Aorta (tissue), 5 donors: ENCODE measurements at regions of chr14 and their contacts with region 1.

Region 1: DNA sequence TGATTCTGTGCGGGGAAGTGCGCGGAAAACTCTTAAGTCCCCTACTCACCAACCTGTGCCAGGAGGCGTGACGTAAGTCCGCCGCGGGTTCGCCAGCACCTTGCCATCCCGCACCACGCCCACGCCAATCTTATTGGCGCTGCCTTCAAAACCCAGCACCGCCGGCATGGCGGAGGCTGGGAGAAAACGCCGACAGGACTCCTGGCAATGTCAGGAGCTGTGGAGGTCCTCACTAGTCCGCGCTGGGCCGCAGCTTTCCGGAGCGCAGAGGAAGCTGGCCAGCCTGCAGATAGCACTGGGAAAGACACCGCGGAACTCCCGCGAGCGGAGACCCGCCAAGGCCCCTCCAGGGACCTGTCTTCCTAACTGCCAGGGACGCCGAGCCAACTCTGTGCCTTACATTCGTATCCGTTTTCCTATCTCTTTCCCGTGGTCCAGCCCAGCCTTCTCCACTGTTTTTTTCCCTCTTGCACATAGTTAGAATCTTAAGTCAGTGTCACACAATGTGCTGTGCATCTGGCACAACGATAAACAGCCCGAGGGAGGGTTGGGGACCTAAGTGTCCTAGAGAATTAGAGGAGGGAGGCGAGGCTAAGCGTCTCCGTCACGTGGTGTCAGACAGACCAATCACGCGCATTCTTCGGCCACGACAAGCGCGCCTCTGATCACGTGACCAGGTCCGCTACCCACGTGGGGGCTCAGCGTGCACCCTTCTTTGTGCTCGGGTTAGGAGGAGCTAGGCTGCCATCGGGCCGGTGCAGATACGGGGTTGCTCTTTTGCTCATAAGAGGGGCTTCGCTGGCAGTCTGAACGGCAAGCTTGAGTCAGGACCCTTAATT is at the starts of genes APEX1 and OSGEP:
- DNase-seq: peak; percentile 99
- ATAC-seq: peak; percentile 98
- H3K4me3 ChIP-seq: peak within 1 kb of the TSS; percentile 68 to 91
- H3K27ac ChIP-seq: peak within 1 kb of the TSS; percentile 16 to 75
- H3K4me1 ChIP-seq: no peaks in the 10 kb centered on the region
- H3K27me3 ChIP-seq: no peaks in the 10 kb centered on the region
- total RNA-seq, gene APEX1: 51.1 to 66.0 TPM
- total RNA-seq, gene OSGEP: 27.5 to 40.0 TPM

Region 2: GRCh38 chr14:20327005-20327869 is 127.5 kb before region 1 on chr14:
- intact Hi-C with region 1: no loop called
- DNase-seq: no peak
- ATAC-seq: peak; percentile 74
- H3K4me3 ChIP-seq: no peak overlapping the region
- H3K27ac ChIP-seq: peak overlapping the region in 1 of 2 donors; percentile 36
- H3K4me1 ChIP-seq: no peaks in the 10 kb centered on the region
- H3K27me3 ChIP-seq: no peaks in the 10 kb centered on the region

Region 3: GRCh38 chr14:20343092-20343861 is 111.5 kb before region 1 on chr14 and contains the start of gene PARP2:
- intact Hi-C with region 1: loop called in 1 of 2 experiments (anchors 2 kb)
- DNase-seq: peak; percentile 98 to 99
- ATAC-seq: peak; percentile 99
- H3K4me3 ChIP-seq: peak within 1 kb of the TSS; percentile 92 to 96
- H3K27ac ChIP-seq: peak within 1 kb of the TSS; percentile 80 to 94
- H3K4me1 ChIP-seq: no peaks in the 10 kb centered on the region
- H3K27me3 ChIP-seq: no peaks in the 10 kb centered on the region
- total RNA-seq, gene PARP2: 13.4 to 19.5 TPM

Region 4: GRCh38 chr14:20413045-20413799 is 41.5 kb before region 1 on chr14 and contains the start of gene TEP1:
- intact Hi-C with region 1: loop called (anchors 5 kb)
- DNase-seq: peak; percentile 94 to 96
- ATAC-seq: peak; percentile 96
- H3K4me3 ChIP-seq: peak within 1 kb of the TSS; percentile 87 to 96
- H3K27ac ChIP-seq: peak within 1 kb of the TSS; percentile 84 to 99
- H3K4me1 ChIP-seq: peaks cover 3 to 7% of the 10 kb centered on the region in 2 donors
- H3K27me3 ChIP-seq: no peaks in the 10 kb centered on the region
- total RNA-seq, gene TEP1: 49.0 to 62.4 TPM

Region 5: DNA sequence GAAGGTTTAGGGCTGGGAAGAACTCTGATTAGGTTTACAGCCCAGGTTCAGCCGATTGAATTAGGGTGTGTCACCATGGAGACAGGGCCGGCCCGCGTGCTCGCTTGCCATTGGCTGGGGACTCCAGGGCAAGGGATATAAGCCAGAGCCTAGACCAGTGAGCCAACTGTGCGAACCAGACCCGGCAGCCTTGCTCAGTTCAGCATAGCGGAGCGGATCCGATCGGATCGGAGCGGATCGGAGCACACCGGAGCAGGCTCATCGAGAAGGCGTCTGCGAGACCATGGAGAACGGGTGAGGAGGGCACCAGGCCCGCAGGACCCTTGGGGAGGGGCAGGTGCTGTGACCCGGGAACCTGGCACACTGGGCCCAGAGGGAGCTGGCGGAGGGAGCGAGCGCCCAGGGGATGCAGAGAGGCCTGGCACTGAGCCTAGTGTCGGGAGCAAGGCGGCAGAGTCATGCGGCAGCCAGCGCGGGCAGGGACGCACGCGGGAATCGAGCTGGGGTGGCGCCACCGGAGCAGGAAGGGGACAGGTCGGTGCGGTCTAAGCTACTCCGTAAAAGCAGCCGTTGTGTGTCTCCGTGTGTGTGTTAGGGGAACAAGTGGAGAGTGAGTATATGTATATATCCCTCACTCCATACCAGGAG is 14.6 kb after region 1 on chr14 and contains the start of gene PNP:
- intact Hi-C with region 1: loop called in 1 of 2 experiments (anchors 1 kb)
- DNase-seq: peak; percentile 94 to 95
- ATAC-seq: peak; percentile 97
- H3K4me3 ChIP-seq: peak within 1 kb of the TSS; percentile 3 to 54
- H3K27ac ChIP-seq: peak within 1 kb of the TSS in 1 of 2 donors; percentile 33
- H3K4me1 ChIP-seq: peaks cover 0 to 3% of the 10 kb centered on the region in 2 donors
- H3K27me3 ChIP-seq: no peaks in the 10 kb centered on the region
- total RNA-seq, gene PNP: 46.2 to 54.1 TPM